CD8-positive, alpha-beta T cell (primary cell): ENCODE measurements at regions of chr10 and their contacts with region 1.

Region 1: GRCh38 chr10:118046395-118047156 is at the start of gene RAB11FIP2:
- DNase-seq: peak; percentile 93 to 98 (median 96)
- ATAC-seq: peak; percentile 94
- H3K4me3 ChIP-seq: peak within 1 kb of the TSS; percentile 54 to 75
- H3K4me3 Mint-ChIP-seq: peak within 1 kb of the TSS; percentile 89
- H3K27ac ChIP-seq: peak within 1 kb of the TSS; percentile 44 to 70
- H3K27ac Mint-ChIP-seq: peak within 1 kb of the TSS; percentile 89
- H3K4me1 ChIP-seq: peaks cover 18% of the 10 kb centered on the region
- H3K4me1 Mint-ChIP-seq: peaks cover 45% of the 10 kb centered on the region
- H3K27me3 ChIP-seq: no peaks in the 10 kb centered on the region
- H3K27me3 Mint-ChIP-seq: no peaks in the 10 kb centered on the region
- CTCF ChIP-seq: no peak
- total RNA-seq, gene RAB11FIP2: 32.6 to 34.2 TPM

Region 2: GRCh38 chr10:118341791-118342637 is 295.4 kb after region 1 on chr10 and contains the start of gene FAM204A:
- CTCF ChIA-PET with region 1: no interaction called
- POLR2A ChIA-PET with region 1: no interaction called
- intact Hi-C with region 1: loop called (anchors 1 to 2 kb)
- DNase-seq: peak; percentile 95 to 99 (median 97)
- ATAC-seq: peak; percentile 94
- H3K4me3 ChIP-seq: peak within 1 kb of the TSS; percentile 81 to 86
- H3K4me3 Mint-ChIP-seq: peak within 1 kb of the TSS; percentile 96
- H3K27ac ChIP-seq: peak within 1 kb of the TSS; percentile 51 to 72
- H3K27ac Mint-ChIP-seq: peak within 1 kb of the TSS; percentile 95
- H3K4me1 ChIP-seq: peaks cover 22% of the 10 kb centered on the region
- H3K4me1 Mint-ChIP-seq: peaks cover 53% of the 10 kb centered on the region
- H3K27me3 ChIP-seq: no peaks in the 10 kb centered on the region
- H3K27me3 Mint-ChIP-seq: no peaks in the 10 kb centered on the region
- CTCF ChIP-seq: no peak
- total RNA-seq, gene FAM204A: 44.8 to 51.7 TPM

Region 3: DNA sequence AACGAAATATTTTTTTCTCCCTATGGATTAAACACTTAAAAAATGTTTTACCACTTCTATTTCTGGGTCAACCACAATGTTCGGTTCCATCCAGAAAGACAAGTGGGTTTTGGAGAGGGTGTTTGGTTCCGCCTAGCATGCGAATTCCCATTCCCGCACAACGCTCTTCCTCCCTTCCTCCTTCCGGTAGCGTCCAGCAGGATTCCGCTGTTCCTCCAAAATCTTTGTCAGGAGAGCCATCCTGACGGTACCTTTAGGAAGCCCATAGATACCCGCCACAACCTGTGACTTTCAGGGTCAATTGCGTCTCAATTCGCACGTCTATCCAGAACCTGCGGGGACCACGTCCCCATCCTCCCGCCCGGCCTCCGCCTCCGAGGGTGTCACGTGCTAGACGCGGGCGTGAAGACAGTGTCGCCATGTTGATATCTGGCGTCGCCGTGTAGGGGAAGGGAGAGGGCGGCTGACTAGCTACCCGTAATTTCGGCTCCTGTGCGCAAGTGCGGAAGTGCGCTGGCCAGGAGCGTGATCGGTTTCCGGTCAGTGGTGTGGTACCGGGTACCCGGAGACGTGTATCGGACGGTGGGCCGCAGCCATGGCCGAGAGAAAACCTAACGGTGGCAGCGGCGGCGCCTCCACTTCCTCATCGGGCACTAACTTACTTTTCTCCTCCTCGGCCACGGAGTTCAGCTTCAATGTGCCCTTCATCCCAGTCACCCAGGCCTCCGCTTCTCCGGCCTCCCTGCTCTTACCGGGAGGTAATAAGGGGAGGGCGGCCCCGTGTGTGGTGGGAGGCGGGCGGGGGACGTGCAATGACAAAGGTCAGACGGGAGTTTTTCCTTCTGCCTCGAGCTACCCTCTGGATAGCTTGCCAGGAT is 1845.9 kb after region 1 on chr10 and contains the start of gene SEC23IP:
- CTCF ChIA-PET with region 1: no interaction called
- POLR2A ChIA-PET with region 1: no interaction called
- intact Hi-C with region 1: loop called in 1 of 2 experiments (anchors 10 kb)
- DNase-seq: peak; percentile 78 to 95 (median 89)
- ATAC-seq: peak; percentile 98
- H3K4me3 ChIP-seq: peak within 1 kb of the TSS; percentile 97 to 98
- H3K4me3 Mint-ChIP-seq: peak within 1 kb of the TSS; percentile 98
- H3K27ac ChIP-seq: peak within 1 kb of the TSS; percentile 84 to 96
- H3K27ac Mint-ChIP-seq: peak within 1 kb of the TSS; percentile 99
- H3K4me1 ChIP-seq: peaks cover 10% of the 10 kb centered on the region
- H3K4me1 Mint-ChIP-seq: peaks cover 46% of the 10 kb centered on the region
- H3K27me3 ChIP-seq: no peaks in the 10 kb centered on the region
- H3K27me3 Mint-ChIP-seq: no peaks in the 10 kb centered on the region
- CTCF ChIP-seq: no peak
- total RNA-seq, gene SEC23IP: 16.2 to 19.8 TPM